K562 (cell line): ENCODE measurements at regions of chr10 and their contacts with region 1.

Region 1: GRCh38 chr10:60434418-60435046 is 44.9 kb upstream of the ANK3 start:
- DNase-seq: peak; percentile 53 to 72 (median 57)
- ATAC-seq: peak; percentile 87
- H3K4me3 ChIP-seq: no peak overlapping the region
- H3K27ac ChIP-seq: no peak overlapping the region
- H3K4me1 ChIP-seq: peaks cover 0 to under 1% of the 10 kb centered on the region in 2 experiments; a peak in 1 of 5 replicates
- H3K27me3 ChIP-seq: no peaks in the 10 kb centered on the region
- CTCF ChIP-seq: peak; percentile 71 to 92 (median 73); a peak in 5 of 6 replicates
- EP300 ChIP-seq: no peak
- POLR2A ChIP-seq: no peak
- RAD21 ChIP-seq: peak; percentile 99

Region 2: GRCh38 chr10:60099998-60100747 is 334.4 kb before region 1 on chr10:
- CTCF ChIA-PET with region 1: interaction called, 20 read pairs
- POLR2A ChIA-PET with region 1: no interaction called
- in situ Hi-C with region 1: no loop called
- intact Hi-C with region 1: loop called (anchors 1 kb)
- DNase-seq: peak; percentile 53 to 77 (median 60)
- ATAC-seq: peak; percentile 83
- H3K4me3 ChIP-seq: no peak overlapping the region
- H3K27ac ChIP-seq: peak overlapping the region; percentile 54; the same call in 1 of the 3 replicates
- H3K4me1 ChIP-seq: peaks cover 0 to 7% of the 10 kb centered on the region in 2 experiments; a peak in 2 of 5 replicates
- H3K27me3 ChIP-seq: no peaks in the 10 kb centered on the region
- CTCF ChIP-seq: peak; percentile 55 to 89 (median 61); a peak in 4 of 6 replicates
- EP300 ChIP-seq: peak; percentile 50; the same call in 1 of the 2 replicates
- POLR2A ChIP-seq: no peak
- RAD21 ChIP-seq: peak; percentile 65 to 85

Region 3: GRCh38 chr10:60114765-60115586 is 319.6 kb before region 1 on chr10:
- CTCF ChIA-PET with region 1: interaction called, 13 read pairs
- POLR2A ChIA-PET with region 1: no interaction called
- in situ Hi-C with region 1: no loop called
- intact Hi-C with region 1: no loop called
- DNase-seq: peak; percentile 19 to 76 (median 44)
- ATAC-seq: peak; percentile 92
- H3K4me3 ChIP-seq: no peak overlapping the region
- H3K27ac ChIP-seq: no peak overlapping the region
- H3K4me1 ChIP-seq: no peaks in the 10 kb centered on the region
- H3K27me3 ChIP-seq: no peaks in the 10 kb centered on the region
- CTCF ChIP-seq: peak; percentile 73 to 84 (median 74)
- EP300 ChIP-seq: no peak
- POLR2A ChIP-seq: no peak
- RAD21 ChIP-seq: peak; percentile 88 to 93

Region 4: DNA sequence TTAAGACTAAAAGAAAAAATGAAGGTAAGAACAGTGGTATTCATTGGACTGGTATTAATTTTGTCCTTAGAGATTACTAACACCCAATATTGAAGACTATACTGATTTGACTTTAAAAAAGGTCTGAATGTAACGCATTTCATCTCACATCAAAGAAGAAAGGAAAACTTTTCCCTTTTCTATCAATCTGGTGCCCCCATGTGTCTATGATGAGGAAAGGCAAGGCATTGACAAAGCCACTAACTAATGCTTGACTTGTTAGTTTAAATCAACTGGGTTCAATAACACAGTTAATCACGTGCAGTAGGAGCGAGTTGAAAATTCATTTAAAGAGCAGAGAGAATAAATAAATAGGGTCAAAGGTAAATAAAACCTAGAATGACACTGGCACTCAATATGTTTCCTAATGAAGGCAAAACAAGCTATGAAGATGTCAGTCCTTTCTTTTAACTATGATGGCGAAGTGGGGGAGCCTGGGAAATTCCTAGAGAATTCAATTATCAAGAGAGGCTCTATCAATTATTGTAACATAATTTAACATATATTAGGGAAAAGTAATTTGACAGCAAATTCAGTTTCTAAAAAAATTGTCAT is 225.8 kb before region 1 on chr10:
- CTCF ChIA-PET with region 1: interaction called, 14 read pairs
- POLR2A ChIA-PET with region 1: interaction called, 3 read pairs
- in situ Hi-C with region 1: loop called (anchors 10 kb)
- intact Hi-C with region 1: loop called (anchors 1 kb)
- DNase-seq: peak; percentile 22 to 60 (median 28)
- ATAC-seq: peak; percentile 69
- H3K4me3 ChIP-seq: no peak overlapping the region
- H3K27ac ChIP-seq: no peak overlapping the region
- H3K4me1 ChIP-seq: no peaks in the 10 kb centered on the region
- H3K27me3 ChIP-seq: no peaks in the 10 kb centered on the region
- CTCF ChIP-seq: peak; percentile 69 to 92 (median 85)
- EP300 ChIP-seq: no peak
- POLR2A ChIP-seq: no peak
- RAD21 ChIP-seq: peak; percentile 96 to 99

Region 5: DNA sequence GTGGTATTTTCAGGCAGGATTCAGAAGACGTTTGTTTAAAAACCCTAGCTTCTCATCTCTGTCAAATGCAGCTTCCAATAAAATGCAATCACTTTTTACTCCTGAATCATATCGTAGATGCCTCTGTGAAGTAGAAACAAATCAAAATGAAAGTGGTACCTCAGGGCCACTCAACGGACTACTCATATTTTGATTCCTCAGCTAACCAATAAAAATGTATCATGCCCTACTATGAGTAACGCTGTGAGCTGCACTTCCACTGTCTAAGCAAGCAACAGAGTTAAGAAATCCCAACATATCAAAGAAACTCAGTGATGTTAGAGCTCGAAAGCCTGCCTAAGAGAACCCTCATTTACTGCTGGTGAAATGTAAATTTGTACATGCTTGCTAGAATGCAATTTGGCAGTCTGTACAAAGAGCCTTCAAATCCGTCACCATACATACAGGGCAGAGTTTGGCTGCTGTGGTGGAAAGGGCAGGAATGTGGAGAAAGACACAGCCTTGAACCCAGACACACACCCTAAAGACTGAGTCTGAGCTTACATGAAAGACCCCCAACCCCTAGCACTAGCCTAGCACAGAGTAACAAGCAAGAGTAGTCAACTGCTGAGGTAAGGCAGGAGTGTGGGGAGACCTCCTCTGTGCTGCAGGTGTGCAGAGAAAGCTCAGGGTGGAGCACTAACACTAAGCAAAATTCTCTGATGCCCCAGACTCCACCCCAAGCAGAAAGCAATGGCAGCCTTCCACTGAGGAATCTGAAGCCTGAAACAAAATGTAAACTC is 196.4 kb before region 1 on chr10:
- CTCF ChIA-PET with region 1: interaction called, 17 read pairs
- POLR2A ChIA-PET with region 1: interaction called, 3 read pairs
- in situ Hi-C with region 1: loop called (anchors 10 kb)
- intact Hi-C with region 1: loop called (anchors 1 kb)
- DNase-seq: peak in 2 of 4 experiments; percentile 60 to 62
- ATAC-seq: peak; percentile 99
- H3K4me3 ChIP-seq: no peak overlapping the region
- H3K27ac ChIP-seq: no peak overlapping the region
- H3K4me1 ChIP-seq: peaks cover 5 to 12% of the 10 kb centered on the region in 2 experiments; a peak in 2 of 5 replicates
- H3K27me3 ChIP-seq: no peaks in the 10 kb centered on the region
- CTCF ChIP-seq: peak; percentile 64 to 81 (median 76)
- EP300 ChIP-seq: no peak
- POLR2A ChIP-seq: no peak
- RAD21 ChIP-seq: peak; percentile 90 to 91

Region 6: DNA sequence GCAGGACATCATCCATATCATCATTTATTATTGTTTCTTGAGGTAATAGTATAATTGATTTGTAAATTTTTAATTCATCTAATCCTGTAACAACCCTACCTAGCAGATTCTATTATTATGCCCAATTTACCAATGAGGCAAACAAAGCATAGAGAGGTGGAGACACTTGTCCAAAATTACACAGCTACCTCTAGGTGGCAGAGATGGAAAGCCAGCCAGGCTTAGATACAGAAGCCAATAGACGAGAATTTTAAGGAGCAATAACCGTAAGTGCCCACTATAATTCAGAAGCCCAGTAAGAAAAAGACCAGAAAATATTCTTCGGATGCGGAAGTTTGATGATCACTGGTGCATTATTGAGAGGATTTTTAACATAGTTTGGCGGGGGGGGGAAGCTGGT is 98.8 kb before region 1 on chr10:
- CTCF ChIA-PET with region 1: interaction called, 7 read pairs
- POLR2A ChIA-PET with region 1: no interaction called
- in situ Hi-C with region 1: no loop called
- intact Hi-C with region 1: loop called (anchors 1 kb)
- DNase-seq: peak in 1 of 4 experiments; percentile 56
- ATAC-seq: peak; percentile 88
- H3K4me3 ChIP-seq: no peak overlapping the region
- H3K27ac ChIP-seq: no peak overlapping the region
- H3K4me1 ChIP-seq: no peaks in the 10 kb centered on the region
- H3K27me3 ChIP-seq: no peaks in the 10 kb centered on the region
- CTCF ChIP-seq: peak; percentile 47 to 74 (median 55)
- EP300 ChIP-seq: no peak
- POLR2A ChIP-seq: no peak
- RAD21 ChIP-seq: peak; percentile 79 to 86

Region 7: DNA sequence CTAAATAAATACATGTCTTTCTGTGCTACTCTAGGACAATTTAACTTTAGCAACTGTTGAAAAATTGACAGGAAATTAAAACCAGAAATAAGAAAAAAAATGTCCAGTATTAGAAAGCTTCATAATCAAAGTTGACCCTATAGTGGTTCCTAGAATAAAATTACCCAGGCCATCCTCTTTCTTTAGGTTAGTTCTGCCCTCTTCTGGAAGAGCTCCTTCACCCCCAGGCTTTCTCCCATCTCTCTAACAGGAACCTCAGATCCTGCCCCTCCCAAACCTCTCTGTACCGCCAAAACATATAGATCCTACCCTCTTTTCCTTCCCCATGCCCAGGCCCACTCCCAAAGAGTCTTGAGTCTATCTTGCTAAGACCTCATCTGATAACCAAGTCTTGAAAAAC is 184.3 kb after region 1 on chr10:
- CTCF ChIA-PET with region 1: no interaction called
- POLR2A ChIA-PET with region 1: no interaction called
- in situ Hi-C with region 1: no loop called
- intact Hi-C with region 1: no loop called
- DNase-seq: no peak
- ATAC-seq: peak; percentile 48; the same call in 1 of the 3 replicates
- H3K4me3 ChIP-seq: no peak overlapping the region
- H3K27ac ChIP-seq: no peak overlapping the region
- H3K4me1 ChIP-seq: no peaks in the 10 kb centered on the region
- H3K27me3 ChIP-seq: no peaks in the 10 kb centered on the region
- CTCF ChIP-seq: 0 out of 6 replicates have a peak, but pooled peaks of 2 of the 3 experiments have one; percentile 3 to 18
- EP300 ChIP-seq: no peak
- POLR2A ChIP-seq: no peak
- RAD21 ChIP-seq: 0 out of 4 replicates have a peak, but pooled peaks of 1 of the 2 experiments have one; percentile 14